ENCODE measurements at regions of chr12 and their contacts with region 1.

Region 1: DNA sequence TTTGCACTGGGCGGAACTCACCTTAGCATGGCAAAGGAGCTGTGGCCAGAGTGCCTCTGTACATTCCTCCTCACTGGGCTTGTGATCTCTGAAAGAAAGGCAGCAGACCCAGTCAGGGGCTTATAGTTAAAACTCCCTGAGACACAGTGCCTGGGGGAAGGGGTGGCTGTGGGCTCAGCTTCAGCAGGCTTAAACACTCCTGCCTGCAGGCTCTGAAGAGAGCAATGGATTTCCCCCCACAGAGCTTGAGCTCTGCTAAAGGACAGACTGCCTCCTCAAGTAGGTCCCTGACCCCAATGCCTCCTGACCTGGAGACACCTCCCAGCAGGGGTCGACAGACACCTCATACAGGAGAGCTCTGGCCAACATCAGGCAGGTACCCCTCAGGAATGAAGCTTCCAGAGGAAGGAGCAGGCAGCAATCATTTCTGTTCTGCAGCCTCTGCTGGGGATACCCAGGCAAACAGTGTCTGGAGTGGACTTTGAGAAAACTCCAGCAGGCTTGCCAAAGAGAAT is 327.5 kb upstream of the SLC16A7 start:
- DNase-seq: no peak
- H3K4me3 ChIP-seq: no peak overlapping the region
- H3K27ac ChIP-seq: no peak overlapping the region
- H3K4me1 ChIP-seq: no peaks in the 10 kb centered on the region
- H3K27me3 ChIP-seq: no peaks in the 10 kb centered on the region
- CTCF ChIP-seq: no peak
- POLR2A ChIP-seq: no peak

Region 2: GRCh38 chr12:58765653-58766512 is 502.5 kb before region 1 on chr12:
- intact Hi-C with region 1: no loop called
- DNase-seq: no peak
- H3K4me3 ChIP-seq: no peak overlapping the region
- H3K27ac ChIP-seq: no peak overlapping the region
- H3K4me1 ChIP-seq: no peaks in the 10 kb centered on the region
- H3K27me3 ChIP-seq: no peaks in the 10 kb centered on the region
- CTCF ChIP-seq: no peak
- POLR2A ChIP-seq: no peak

Region 3: GRCh38 chr12:59431266-59431665 is 162.9 kb after region 1 on chr12:
- intact Hi-C with region 1: no loop called
- DNase-seq: no peak
- H3K4me3 ChIP-seq: no peak overlapping the region
- H3K27ac ChIP-seq: no peak overlapping the region
- H3K4me1 ChIP-seq: no peaks in the 10 kb centered on the region
- H3K27me3 ChIP-seq: no peaks in the 10 kb centered on the region
- CTCF ChIP-seq: no peak
- POLR2A ChIP-seq: no peak

Region 4: DNA sequence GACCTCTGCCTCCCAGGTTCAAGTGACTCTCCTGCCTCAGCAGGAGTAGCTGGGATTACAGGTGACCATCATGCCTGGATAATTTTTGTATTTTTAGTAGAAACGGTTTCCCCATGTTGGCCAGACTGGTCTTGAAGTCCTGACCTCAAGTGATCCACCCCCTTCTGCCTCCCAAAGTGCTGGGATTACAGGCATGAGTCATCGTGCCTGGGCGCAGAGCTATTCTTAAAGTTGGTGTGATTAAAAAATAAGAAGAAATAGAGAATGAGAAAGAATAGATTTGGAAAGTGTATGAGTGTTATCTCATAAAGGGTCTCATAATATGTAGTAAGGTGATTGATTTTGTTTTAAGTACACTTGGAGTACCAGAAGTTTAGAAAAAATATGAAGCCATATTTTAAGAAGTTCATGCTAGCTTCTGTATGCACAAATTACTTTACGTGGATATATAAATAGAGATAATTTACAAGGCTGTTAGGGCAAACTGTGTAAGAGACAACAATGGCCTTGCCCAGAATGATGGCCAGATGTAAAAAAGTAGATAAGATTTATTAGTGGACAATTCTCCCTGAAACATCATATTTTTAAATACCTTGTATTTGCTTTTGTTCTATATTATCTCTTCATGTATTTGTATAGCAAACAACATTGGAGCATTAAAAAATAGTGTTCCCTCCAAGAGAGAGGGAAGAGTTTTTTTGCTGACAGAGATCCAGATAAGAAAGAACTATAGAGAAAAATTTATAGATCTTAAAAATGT is 1436.0 kb after region 1 on chr12:
- intact Hi-C with region 1: loop called (anchors 5 kb)
- DNase-seq: no peak
- H3K4me3 ChIP-seq: no peak overlapping the region
- H3K27ac ChIP-seq: no peak overlapping the region
- H3K4me1 ChIP-seq: no peaks in the 10 kb centered on the region
- H3K27me3 ChIP-seq: no peaks in the 10 kb centered on the region
- CTCF ChIP-seq: no peak
- POLR2A ChIP-seq: no peak